ENCODE measurements at regions of chr1 and their contacts with region 1.

Region 1: DNA sequence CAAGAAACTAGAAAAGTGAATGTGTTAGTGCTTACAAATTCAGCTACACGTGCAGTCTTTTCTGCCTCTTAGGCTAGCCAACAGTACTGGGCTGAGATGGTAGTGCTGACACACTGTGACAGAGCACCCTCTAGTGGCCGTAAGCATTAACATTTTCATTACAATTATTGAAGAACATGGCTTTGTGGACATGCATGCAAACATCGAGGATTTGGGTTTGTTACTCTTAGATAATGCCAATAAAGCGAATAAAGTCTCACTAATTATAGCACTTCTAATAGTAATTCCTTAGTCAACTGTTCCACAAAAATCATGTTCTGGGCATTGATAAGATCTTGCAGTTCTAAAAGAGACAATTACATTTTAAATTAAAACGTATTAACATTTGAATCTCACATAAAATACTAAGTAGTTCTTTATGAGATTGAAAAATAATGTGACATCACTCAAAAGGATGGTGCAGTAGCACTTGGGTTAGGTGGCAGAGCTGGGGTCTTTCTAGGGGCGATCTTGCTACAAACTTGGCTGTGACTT is 47.1 kb downstream of the MYSM1 start:
- DNase-seq: peak in 1 of 2 donors; percentile 52
- H3K4me3 ChIP-seq: no peak overlapping the region
- CTCF ChIP-seq: peak in 1 of 3 donors; percentile 57
- POLR2A ChIP-seq: no peak

Region 2: DNA sequence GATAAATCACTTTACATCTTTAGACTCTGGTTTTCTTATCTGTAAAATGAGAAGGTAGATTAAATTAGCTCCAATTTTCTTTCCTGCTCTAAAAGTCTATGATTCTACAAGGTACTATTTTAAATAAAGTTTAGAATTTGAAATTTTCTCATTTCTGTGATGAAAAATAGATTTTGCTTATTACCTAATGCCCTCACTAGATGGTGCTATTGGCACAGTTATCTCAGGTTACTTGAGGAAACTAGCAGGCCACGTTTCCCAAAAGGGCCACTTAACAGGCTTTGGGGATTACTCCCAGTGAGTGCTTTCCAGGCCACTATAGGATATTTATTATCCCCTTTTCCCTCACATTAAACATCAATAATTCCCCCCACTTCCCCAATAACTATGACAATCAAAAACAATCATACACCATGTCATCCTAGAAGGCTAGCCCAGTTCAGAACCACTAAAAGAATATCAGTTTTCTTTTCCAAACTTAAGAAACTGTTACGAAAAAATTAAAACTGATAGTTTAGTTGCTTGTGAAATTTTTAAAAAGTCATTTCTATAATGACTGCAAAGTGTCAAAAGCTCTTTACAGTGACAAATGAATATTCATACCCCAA is 136.8 kb before region 1 on chr1:
- intact Hi-C with region 1: loop called (anchors 5 kb)
- DNase-seq: peak in 1 of 2 donors; percentile 37
- H3K4me3 ChIP-seq: no peak overlapping the region
- CTCF ChIP-seq: peak in 1 of 3 donors; percentile 41
- POLR2A ChIP-seq: no peak

Region 3: GRCh38 chr1:58841455-58841854 is 188.7 kb after region 1 on chr1:
- intact Hi-C with region 1: no loop called
- DNase-seq: no peak
- H3K4me3 ChIP-seq: no peak overlapping the region
- CTCF ChIP-seq: no peak
- POLR2A ChIP-seq: no peak

Measured in lower leg skin (tissue), 4 donors.